ENCODE measurements at regions of chr17 and their contacts with region 1.

Region 1: GRCh38 chr17:62008294-62008693 is 56.8 kb downstream of the MED13 start:
- DNase-seq: no peak
- H3K4me3 ChIP-seq: no peak overlapping the region
- H3K27ac ChIP-seq: no peak overlapping the region
- H3K4me1 ChIP-seq: no peaks in the 10 kb centered on the region
- H3K27me3 ChIP-seq: no peaks in the 10 kb centered on the region
- CTCF ChIP-seq: no peak

Region 2: DNA sequence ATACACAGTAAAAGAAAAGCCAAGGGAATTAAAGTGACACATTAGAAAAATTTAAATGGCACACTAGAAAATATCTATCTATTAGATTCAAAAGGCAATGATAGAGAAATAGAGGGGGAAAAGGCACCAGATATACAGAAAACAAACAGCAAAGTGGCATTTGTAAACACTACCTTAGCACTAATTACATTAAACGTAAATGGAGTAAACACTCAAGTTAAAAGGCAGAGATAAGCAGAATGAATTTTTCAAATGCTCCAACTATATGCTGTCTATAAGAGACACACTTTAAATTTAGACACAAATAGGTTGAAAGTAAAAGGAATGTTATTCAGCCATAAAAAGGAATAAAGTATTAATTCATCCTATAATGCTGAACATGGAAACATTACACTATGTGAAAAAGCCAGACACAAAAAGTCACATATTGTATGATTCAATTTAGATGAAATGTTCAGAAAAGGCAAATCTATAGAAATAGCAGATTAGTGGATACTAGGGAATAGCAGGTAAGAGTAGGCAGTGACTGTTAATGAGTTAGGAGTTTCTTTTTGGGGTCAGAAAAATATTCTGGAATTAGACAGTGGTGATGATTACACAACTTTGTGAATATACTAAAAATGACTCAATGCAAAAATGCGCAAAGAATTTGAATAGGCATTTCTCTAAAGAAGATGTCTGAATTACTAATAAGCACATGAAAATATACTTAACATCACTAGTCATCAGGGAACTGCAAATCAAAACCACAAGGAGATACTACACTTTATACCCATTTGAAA is 237.4 kb before region 1 on chr17:
- CTCF ChIA-PET with region 1: interaction called, 10 read pairs
- dilution Hi-C with region 1: no loop called
- in situ Hi-C with region 1: no loop called
- intact Hi-C with region 1: no loop called
- DNase-seq: peak; percentile 40
- H3K4me3 ChIP-seq: no peak overlapping the region
- H3K27ac ChIP-seq: no peak overlapping the region
- H3K4me1 ChIP-seq: no peaks in the 10 kb centered on the region
- H3K27me3 ChIP-seq: no peaks in the 10 kb centered on the region
- CTCF ChIP-seq: no peak

Region 3: DNA sequence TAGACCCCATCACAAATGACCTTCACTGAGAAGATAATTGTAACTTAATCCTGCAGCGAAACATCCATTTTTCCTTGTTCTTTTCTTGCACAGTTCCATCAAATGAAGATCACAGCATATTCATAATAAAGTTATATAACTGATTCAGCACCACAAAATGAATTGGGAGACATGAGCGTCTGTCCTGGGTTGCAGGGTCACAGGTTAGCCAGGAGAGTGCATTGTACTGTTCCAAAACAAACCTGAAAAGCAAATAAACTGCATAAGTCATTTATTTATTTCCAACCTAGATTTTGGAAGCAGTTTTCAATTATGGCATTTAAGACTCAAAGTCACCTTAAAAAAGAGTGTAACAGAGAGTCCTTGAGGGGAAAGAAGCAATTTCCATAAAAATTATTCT is 61.9 kb before region 1 on chr17:
- CTCF ChIA-PET with region 1: no interaction called
- dilution Hi-C with region 1: no loop called
- in situ Hi-C with region 1: no loop called
- intact Hi-C with region 1: no loop called
- DNase-seq: no peak
- H3K4me3 ChIP-seq: no peak overlapping the region
- H3K27ac ChIP-seq: no peak overlapping the region
- H3K4me1 ChIP-seq: no peaks in the 10 kb centered on the region
- H3K27me3 ChIP-seq: no peaks in the 10 kb centered on the region
- CTCF ChIP-seq: no peak